Activated B cell treated with CpG ODN at 0.5 μM for 24 hours (primary cell): ENCODE measurements at regions of chr17 and their contacts with region 1.

Region 1: DNA sequence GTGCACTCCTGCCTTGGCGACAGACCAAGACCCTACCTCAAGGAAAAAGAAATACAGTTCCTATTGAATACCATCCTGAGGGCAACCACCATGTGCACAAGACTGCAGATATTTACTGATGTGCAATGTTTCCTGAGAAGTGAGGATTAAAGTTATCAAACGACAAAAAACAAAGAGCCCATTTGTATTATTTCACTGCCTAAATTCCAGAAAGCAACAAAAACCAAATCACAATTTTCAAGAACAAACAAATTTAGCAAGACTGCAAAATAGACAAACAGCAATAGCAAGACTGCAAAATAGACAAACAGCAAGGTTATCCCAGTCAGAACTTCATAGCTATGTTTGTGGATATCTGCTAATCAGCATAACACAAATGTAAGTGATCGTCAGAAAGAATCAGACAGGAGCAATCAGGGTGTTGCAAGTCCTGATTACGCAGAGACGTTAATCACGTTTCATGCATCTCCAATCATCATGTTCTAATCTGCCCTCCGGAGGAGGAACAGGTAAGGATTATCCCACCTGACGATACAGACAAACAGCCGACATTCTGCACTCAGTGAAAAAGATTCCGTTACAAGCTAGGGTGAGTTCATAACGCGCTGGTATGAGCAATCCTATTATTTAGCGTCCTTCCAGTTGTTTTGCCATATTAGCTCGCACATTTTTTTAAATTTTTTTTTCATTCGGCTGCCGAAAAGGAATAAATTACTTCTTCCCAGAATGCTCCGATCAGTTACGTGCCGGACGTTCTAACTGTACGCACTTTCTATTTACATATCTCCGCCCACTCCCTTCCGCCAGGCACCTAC is 2.9 kb downstream of the TMEM107 start:
- DNase-seq: peak; percentile 40
- ATAC-seq: peak; percentile 76
- H3K4me3 Mint-ChIP-seq: peak overlapping the region; percentile 84
- H3K27ac Mint-ChIP-seq: peak overlapping the region; percentile 100
- H3K4me1 Mint-ChIP-seq: peaks cover 44% of the 10 kb centered on the region
- H3K27me3 Mint-ChIP-seq: no peaks in the 10 kb centered on the region
- CTCF ChIP-seq: no peak

Region 2: GRCh38 chr17:8073627-8074484 is 99.4 kb before region 1 on chr17:
- CTCF ChIA-PET with region 1: interaction called, 4 read pairs
- POLR2A ChIA-PET with region 1: interaction called, 20 read pairs
- intact Hi-C with region 1: no loop called
- DNase-seq: peak; percentile 83
- ATAC-seq: peak; percentile 99
- H3K4me3 Mint-ChIP-seq: peak overlapping the region; percentile 78
- H3K27ac Mint-ChIP-seq: peak overlapping the region; percentile 78
- H3K4me1 Mint-ChIP-seq: peaks cover 31% of the 10 kb centered on the region
- H3K27me3 Mint-ChIP-seq: peaks cover 45% of the 10 kb centered on the region
- CTCF ChIP-seq: peak; percentile 56

Region 3: DNA sequence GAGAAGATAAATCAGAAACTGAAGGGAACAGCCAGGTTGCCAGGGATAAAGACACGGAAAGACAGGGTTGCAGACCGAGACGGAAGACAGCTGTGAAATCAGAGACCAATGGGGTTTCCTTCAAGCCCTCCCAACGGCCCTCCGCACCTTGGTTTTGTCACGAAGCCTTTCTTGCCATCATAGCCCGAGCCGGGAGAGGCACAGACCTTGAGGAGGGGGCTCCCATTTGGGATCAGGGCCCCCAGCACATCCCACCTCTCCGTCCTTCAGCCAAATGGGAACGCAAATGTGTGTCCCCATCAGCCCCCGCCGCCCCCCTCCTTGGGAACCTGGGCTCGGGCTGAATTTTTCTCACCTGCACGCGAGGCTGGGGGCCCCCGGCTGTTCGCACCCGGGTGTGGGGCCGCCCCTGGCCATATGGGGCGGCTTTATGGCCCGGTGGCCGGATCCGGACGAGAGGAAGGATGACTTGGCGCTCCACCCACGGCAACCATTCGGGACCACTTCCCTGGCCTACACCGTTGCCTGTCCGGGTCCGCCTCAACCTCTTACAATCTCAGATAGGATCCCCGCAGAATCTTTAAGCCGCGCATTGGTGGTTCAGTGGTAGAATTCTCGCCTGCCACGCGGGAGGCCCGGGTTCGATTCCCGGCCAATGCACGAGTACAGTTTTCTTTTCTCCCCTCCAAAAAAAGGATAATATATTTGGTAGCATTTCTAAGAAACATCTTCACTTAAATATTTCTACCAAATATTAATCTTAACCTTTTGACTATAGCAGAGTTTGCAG is 47.9 kb before region 1 on chr17:
- CTCF ChIA-PET with region 1: no interaction called
- POLR2A ChIA-PET with region 1: interaction called, 57 read pairs
- intact Hi-C with region 1: no loop called
- DNase-seq: peak; percentile 85
- ATAC-seq: peak; percentile 46
- H3K4me3 Mint-ChIP-seq: peak overlapping the region; percentile 93
- H3K27ac Mint-ChIP-seq: peak overlapping the region; percentile 94
- H3K4me1 Mint-ChIP-seq: peaks cover 58% of the 10 kb centered on the region
- H3K27me3 Mint-ChIP-seq: peaks cover 35% of the 10 kb centered on the region
- CTCF ChIP-seq: no peak

Region 4: DNA sequence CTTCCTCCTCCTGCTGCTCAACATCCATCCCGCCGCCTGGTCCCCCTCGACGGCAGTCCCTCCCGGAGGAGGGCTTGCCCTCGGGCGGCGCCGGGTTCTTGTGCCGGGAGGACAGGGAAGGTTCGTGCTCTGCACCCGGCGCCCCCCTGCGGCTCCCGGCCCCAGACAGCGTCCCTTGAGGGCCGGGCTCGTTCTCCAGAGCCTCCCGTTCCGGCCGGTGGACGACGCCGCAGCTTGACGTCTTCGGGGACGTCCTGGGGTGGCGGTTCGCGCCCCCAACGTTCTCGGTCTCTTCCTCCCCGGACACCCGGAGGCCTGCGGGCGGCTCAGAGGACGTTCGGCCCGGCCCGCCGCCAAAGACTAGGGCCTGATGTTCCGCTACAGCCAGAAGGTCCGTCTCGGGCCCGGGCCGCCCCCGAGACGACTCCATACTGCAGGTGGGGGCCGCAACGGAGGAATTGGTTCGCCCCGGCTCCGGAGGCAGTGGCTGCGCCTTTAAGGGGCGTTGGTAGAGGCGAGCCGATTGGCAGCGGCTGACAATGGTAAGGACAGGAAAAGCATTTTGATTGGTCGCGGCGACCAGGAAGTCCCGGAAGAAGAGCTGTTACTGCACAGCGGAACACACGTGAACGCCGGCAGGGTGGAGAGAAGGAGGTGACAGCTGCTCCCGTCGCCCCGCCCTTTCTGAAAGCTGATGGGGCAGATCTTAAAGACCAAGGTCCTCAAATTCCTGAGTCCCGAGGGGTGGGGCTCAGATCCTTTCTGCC is 16.6 kb after region 1 on chr17 and contains the start of gene BORCS6:
- CTCF ChIA-PET with region 1: interaction called, 8 read pairs
- POLR2A ChIA-PET with region 1: interaction called, 365 read pairs
- intact Hi-C with region 1: loop called (anchors 1 kb)
- DNase-seq: peak; percentile 84
- ATAC-seq: peak; percentile 67
- H3K4me3 Mint-ChIP-seq: no peak within 1 kb of the TSS
- H3K27ac Mint-ChIP-seq: peak within 1 kb of the TSS; percentile 95
- H3K4me1 Mint-ChIP-seq: peaks cover 11% of the 10 kb centered on the region
- H3K27me3 Mint-ChIP-seq: no peaks in the 10 kb centered on the region
- CTCF ChIP-seq: no peak
- total RNA-seq, gene BORCS6: 12.3 and 12.8 TPM in 2 replicates

Region 5: GRCh38 chr17:8248751-8249607 is 75.7 kb after region 1 on chr17 and contains the start of gene PFAS:
- CTCF ChIA-PET with region 1: no interaction called
- POLR2A ChIA-PET with region 1: interaction called, 122 read pairs
- intact Hi-C with region 1: loop called (anchors 1 kb)
- DNase-seq: peak; percentile 99
- ATAC-seq: peak; percentile 47
- H3K4me3 Mint-ChIP-seq: peak within 1 kb of the TSS; percentile 99
- H3K27ac Mint-ChIP-seq: peak within 1 kb of the TSS; percentile 99
- H3K4me1 Mint-ChIP-seq: peaks cover 43% of the 10 kb centered on the region
- H3K27me3 Mint-ChIP-seq: no peaks in the 10 kb centered on the region
- CTCF ChIP-seq: no peak
- total RNA-seq, gene PFAS: 121 and 126 TPM in 2 replicates

Region 6: GRCh38 chr17:8875957-8876356 is 702.7 kb after region 1 on chr17:
- CTCF ChIA-PET with region 1: no interaction called
- POLR2A ChIA-PET with region 1: no interaction called
- intact Hi-C with region 1: no loop called
- DNase-seq: no peak
- ATAC-seq: no peak
- H3K4me3 Mint-ChIP-seq: no peak overlapping the region
- H3K27ac Mint-ChIP-seq: no peak overlapping the region
- H3K4me1 Mint-ChIP-seq: peaks cover 6% of the 10 kb centered on the region
- H3K27me3 Mint-ChIP-seq: no peaks in the 10 kb centered on the region
- CTCF ChIP-seq: no peak